ENCODE measurements at regions of chr1 and their contacts with region 1.

Region 1: GRCh38 chr1:202184750-202185460 is 8.7 kb upstream of the LGR6 start:
- DNase-seq: peak; percentile 89 to 95 (median 92)
- H3K4me3 ChIP-seq: no peak overlapping the region
- H3K27ac ChIP-seq: no peak overlapping the region
- H3K4me1 ChIP-seq: no peaks in the 10 kb centered on the region
- H3K27me3 ChIP-seq: no peaks in the 10 kb centered on the region
- CTCF ChIP-seq: peak; percentile 78

Region 2: GRCh38 chr1:201937624-201938213 is 247.2 kb before region 1 on chr1:
- intact Hi-C with region 1: no loop called
- DNase-seq: no peak
- H3K4me3 ChIP-seq: no peak overlapping the region
- H3K27ac ChIP-seq: no peak overlapping the region
- H3K4me1 ChIP-seq: peaks cover 0 to 5% (median 0%) of the 10 kb centered on the region in 3 donors
- H3K27me3 ChIP-seq: no peaks in the 10 kb centered on the region
- CTCF ChIP-seq: no peak

Region 3: GRCh38 chr1:202122639-202123335 is 62.1 kb before region 1 on chr1 and contains the start of gene GPR37L1:
- intact Hi-C with region 1: no loop called
- DNase-seq: peak in 3 of 5 donors; percentile 69 to 77 (median 75)
- H3K4me3 ChIP-seq: no peak within 1 kb of the TSS
- H3K27ac ChIP-seq: no peak within 1 kb of the TSS
- H3K4me1 ChIP-seq: no peaks in the 10 kb centered on the region
- H3K27me3 ChIP-seq: no peaks in the 10 kb centered on the region
- CTCF ChIP-seq: peak; percentile 49
- total RNA-seq, gene GPR37L1: 0.13 TPM

Region 4: DNA sequence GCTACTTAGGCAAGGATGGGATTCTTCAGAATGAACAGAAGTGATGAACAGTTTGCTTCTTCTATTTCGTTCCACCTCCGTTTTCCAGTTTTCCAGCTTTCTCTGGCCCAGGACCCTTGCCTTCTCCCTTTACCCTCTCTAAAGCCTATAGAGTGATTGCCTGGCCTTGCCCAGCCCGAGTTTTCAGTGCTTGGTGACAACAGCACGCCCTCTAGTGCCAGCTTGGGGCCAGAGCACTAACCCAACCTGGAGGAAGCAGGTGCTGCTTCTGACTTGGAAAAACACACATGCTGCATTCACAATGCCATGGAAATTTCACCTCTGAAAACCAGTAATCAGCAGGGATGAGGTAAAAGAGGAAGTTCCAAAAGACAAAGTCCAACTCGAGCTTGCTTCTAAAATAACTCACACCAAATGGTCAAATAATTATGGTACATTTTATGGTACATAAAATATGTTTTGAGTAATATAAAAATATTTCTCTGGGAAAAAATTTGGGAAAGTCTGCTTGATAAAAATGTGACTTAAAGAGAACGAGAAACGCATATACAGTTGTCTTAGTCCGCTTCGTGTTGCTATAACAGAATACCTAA is 130.8 kb after region 1 on chr1:
- intact Hi-C with region 1: loop called (anchors 5 kb)
- DNase-seq: peak; percentile 85 to 91 (median 90)
- H3K4me3 ChIP-seq: no peak overlapping the region
- H3K27ac ChIP-seq: no peak overlapping the region
- H3K4me1 ChIP-seq: no peaks in the 10 kb centered on the region
- H3K27me3 ChIP-seq: no peaks in the 10 kb centered on the region
- CTCF ChIP-seq: peak; percentile 92

Region 5: DNA sequence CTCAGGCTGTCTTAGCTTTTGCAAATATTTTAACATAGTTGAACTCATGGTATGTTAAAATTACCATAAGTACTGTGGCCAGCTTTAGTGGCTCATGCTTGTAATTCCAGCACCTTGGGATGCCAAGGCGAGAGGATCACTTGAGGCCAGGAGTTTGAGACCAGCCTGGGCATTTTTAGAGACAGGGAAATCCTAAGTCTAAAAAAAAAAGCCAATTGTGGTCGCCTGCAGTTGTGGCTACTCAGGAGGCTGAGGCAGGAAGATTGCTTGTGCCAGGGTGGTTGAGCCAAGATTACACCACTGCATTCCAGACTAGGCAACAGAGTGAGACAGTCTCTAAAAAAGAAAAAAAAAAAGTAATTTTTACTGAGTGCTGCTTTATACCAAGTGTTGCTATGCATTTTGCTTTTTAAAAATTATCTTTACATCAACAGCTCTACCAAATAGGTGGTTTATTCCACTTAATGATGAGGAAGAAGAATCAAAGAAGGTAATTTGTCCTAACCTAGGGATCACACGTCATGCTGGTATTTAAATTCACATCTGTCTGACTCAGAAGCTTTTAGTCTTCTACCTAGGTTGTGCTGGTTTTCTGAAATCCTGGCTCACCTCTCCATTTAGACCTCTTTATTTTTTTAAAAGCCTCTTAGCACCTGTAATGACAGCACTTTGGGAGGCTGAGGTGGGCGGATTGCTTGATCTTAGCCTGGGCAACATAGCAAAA is 180.3 kb after region 1 on chr1:
- intact Hi-C with region 1: no loop called
- DNase-seq: no peak
- H3K4me3 ChIP-seq: no peak overlapping the region
- H3K27ac ChIP-seq: no peak overlapping the region
- H3K4me1 ChIP-seq: no peaks in the 10 kb centered on the region
- H3K27me3 ChIP-seq: no peaks in the 10 kb centered on the region
- CTCF ChIP-seq: no peak

Region 6: DNA sequence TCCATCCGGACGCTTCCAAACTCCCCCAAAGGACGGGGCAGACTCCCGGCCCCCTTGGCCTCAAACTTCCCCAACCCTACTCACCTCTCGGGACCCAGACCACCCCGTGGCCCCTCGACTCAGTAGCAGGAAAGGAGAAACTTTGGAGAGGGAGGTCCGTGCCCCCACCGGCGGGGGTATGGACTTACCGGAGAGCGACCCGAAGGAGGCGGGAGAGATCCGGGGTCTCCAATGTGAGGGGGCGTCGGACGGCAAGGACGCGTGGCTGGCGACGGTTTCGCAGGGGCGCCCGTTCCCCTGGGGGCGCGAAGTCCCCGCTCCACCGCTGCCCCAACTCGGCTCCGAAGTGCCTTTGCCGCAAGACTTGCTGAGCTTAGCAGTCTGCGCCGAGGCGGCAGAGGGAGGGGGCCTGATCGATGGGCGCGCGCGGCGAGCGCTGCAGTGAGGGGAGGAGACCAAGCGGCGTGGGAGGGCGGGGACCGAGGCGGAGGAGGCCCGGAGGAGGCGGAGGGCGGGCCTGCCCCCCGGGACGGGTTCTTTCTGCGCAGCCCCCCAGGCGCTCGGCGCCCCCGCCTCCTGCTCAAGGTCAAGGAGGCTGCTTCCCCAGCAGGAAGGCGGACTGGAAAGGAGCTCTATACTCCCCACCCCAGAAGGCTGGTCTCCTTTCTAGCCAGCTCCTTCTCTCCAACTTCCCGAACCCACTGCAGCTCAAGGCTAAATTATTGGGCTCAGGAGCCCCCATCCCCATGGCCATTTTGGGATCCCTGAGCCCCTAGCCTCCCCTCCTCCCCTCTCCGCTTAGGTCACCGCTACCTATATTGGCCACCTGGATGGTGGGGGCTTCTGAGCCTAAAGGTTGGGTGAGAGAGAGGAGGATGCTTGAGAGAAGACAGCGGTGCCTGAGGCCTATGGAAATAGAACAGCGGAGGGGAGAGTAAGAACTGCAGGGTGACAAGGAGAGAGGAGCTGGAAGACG is 525.5 kb after region 1 on chr1 and contains the start of gene SYT2:
- intact Hi-C with region 1: loop called (anchors 10 kb)
- DNase-seq: peak; percentile 60 to 82 (median 82)
- H3K4me3 ChIP-seq: peak within 1 kb of the TSS in 1 of 3 donors; percentile 39
- H3K27ac ChIP-seq: no peak within 1 kb of the TSS
- H3K4me1 ChIP-seq: peaks cover 0 to 2% (median 0%) of the 10 kb centered on the region in 3 donors
- H3K27me3 ChIP-seq: peaks cover 7% of the 10 kb centered on the region
- CTCF ChIP-seq: no peak
- total RNA-seq, gene SYT2: 0.19 TPM

Measured in kidney (tissue), 22 donors.